ENCODE measurements at regions of chr11 and their contacts with region 1.

Region 1: DNA sequence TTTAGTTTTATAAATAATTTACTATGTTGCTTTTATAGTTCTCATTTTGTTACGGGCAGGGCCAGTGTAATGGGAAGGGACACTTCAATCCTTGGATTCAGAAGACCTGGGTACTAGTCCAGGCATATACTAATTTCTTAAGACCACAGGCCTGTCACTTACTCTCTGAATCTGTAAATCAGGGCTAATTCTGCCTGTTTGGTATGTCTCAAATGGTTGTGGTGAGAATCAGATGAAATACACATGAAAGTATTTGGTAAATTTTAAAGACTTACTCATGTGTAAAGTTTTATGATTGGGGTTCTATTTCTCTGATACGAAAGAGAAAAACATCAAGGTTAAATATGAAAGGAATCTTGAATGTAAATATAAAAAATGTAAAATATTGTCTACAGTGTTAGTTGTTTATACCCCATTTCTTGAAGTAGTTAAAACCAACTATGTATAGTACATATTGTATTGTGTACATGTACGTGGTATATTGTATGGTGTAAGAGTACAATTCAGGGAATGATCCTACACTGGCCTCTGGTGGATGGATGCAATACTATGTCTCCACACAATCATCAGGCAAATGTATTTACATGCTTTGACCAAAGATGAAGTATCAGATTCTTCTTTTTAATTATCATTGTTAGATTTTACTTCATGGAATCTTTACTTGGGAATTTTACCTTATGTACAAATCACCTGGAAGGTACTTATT is 24.5 kb upstream of the RAG2 start:
- DNase-seq: no peak
- H3K4me3 ChIP-seq: no peak overlapping the region
- H3K27ac ChIP-seq: no peak overlapping the region
- H3K4me1 ChIP-seq: peaks cover 0 to 15% (median 0%) of the 10 kb centered on the region in 4 donors
- H3K27me3 ChIP-seq: no peaks in the 10 kb centered on the region
- CTCF ChIP-seq: peak; percentile 39 to 49 (median 42)
- EP300 ChIP-seq: no peak
- POLR2A ChIP-seq: no peak

Region 2: GRCh38 chr11:37812281-37812880 is 1189.8 kb after region 1 on chr11:
- in situ Hi-C with region 1: no loop called
- intact Hi-C with region 1: no loop called
- DNase-seq: no peak
- H3K4me3 ChIP-seq: no peak overlapping the region
- H3K27ac ChIP-seq: no peak overlapping the region
- H3K4me1 ChIP-seq: no peaks in the 10 kb centered on the region
- H3K27me3 ChIP-seq: no peaks in the 10 kb centered on the region
- CTCF ChIP-seq: no peak
- EP300 ChIP-seq: no peak
- POLR2A ChIP-seq: no peak

Region 3: GRCh38 chr11:37858398-37858797 is 1235.8 kb after region 1 on chr11:
- in situ Hi-C with region 1: no loop called
- intact Hi-C with region 1: loop called (anchors 10 kb)
- DNase-seq: no peak
- H3K4me3 ChIP-seq: no peak overlapping the region
- H3K27ac ChIP-seq: no peak overlapping the region
- H3K4me1 ChIP-seq: no peaks in the 10 kb centered on the region
- H3K27me3 ChIP-seq: no peaks in the 10 kb centered on the region
- CTCF ChIP-seq: no peak
- EP300 ChIP-seq: no peak
- POLR2A ChIP-seq: no peak